ENCODE measurements at regions of chr2 and their contacts with region 1.

Region 1: GRCh38 chr2:127486247-127487058 is 39.8 kb downstream of the IWS1 start:
- DNase-seq: no peak

Region 2: GRCh38 chr2:127324635-127325034 is 161.8 kb before region 1 on chr2:
- intact Hi-C with region 1: loop called in 1 of 2 experiments (anchors 5 kb)
- DNase-seq: no peak